Naive thymus-derived CD4-positive, alpha-beta T cell (primary cell): ENCODE measurements at regions of chr22 and their contacts with region 1.

Region 1: DNA sequence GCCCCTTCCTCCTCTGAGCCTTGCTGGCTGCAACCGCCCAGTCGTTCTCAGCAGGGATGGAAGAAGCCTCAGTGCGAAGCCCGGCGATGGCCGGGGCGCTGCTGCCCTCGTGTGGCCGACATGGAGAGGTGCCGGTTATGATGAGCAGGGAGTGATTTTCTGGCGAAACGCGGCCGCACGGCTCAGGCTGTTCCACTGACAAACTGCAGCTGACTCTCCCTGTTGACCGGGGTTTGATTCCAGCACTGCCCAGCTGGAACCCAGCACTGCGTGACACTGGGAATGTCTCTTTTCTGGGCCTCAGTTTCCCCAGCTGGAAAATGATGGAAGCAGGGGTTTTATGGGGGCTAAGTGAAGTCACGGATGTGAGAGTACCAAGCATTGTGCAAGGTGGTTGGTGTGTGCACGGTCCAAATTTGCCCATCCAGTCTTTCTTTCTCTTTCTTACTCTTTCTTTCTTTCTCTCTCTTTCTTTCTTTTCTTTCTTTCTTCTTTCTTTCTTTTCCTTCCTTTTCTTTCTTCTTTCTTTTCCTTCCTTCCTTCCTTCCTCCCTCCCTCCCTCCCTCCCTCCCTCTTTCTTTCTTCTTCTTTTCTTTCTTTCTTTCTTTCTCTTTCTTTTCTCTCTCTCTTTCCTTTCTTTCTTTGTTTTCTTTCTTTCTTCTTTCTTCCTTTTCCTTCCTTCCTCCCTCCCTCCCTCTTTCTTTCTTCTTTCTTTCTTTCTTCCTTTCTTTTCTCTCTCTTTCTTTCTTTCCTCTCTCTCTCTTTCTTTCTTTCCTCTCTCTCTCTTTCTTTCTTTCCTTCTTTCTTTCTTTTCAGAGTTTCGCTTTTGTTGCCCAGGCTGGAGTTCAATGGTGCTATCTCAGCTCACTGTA is 25.8 kb upstream of the MPPED1 start:
- DNase-seq: peak; percentile 34 to 74 (median 63)
- ATAC-seq: peak; percentile 92
- H3K4me3 ChIP-seq: no peak overlapping the region
- H3K4me3 Mint-ChIP-seq: peak overlapping the region in 4 of 10 donors; percentile 18 to 51 (median 32)
- H3K27ac ChIP-seq: no peak overlapping the region
- H3K27ac Mint-ChIP-seq: no peak overlapping the region
- H3K4me1 ChIP-seq: no peaks in the 10 kb centered on the region
- H3K4me1 Mint-ChIP-seq: peaks cover 0 to 8% (median 3%) of the 10 kb centered on the region in 7 donors
- H3K27me3 ChIP-seq: peaks cover 0 to 3% of the 10 kb centered on the region in 2 donors
- H3K27me3 Mint-ChIP-seq: peaks cover 8 to 47% (median 18%) of the 10 kb centered on the region in 5 donors

Region 2: DNA sequence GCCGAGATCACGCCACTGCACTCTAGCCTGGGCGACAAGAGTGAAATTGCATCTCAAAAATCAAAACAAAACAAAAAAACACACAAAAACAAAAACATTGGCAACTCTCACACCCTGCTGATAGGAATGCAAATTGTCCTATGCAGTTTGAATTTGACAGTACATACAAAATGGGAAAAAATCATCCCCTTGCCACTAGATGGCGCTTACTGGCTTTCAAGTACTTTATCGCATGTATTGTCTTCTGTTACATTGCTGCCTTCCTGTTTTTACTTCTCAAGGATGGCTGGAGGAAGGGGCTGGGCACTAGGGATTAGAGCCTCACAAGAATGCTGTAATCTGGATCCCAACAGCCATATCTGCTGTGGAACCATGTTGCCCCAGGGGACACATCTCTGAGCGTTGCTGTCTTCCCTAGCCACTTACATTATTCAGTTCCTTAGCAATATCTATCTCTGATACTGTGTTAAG is 605.9 kb before region 1 on chr22:
- CTCF ChIA-PET with region 1: no interaction called
- POLR2A ChIA-PET with region 1: no interaction called
- intact Hi-C with region 1: loop called in 1 of 2 experiments (anchors 5 kb)
- DNase-seq: peak in 7 of 9 donors; percentile 44 to 72 (median 62)
- ATAC-seq: peak; percentile 73
- H3K4me3 ChIP-seq: no peak overlapping the region
- H3K4me3 Mint-ChIP-seq: no peak overlapping the region
- H3K27ac ChIP-seq: no peak overlapping the region
- H3K27ac Mint-ChIP-seq: no peak overlapping the region
- H3K4me1 ChIP-seq: no peaks in the 10 kb centered on the region
- H3K4me1 Mint-ChIP-seq: peaks cover 0 to 2% (median 0%) of the 10 kb centered on the region in 7 donors
- H3K27me3 ChIP-seq: no peaks in the 10 kb centered on the region
- H3K27me3 Mint-ChIP-seq: no peaks in the 10 kb centered on the region

Region 3: GRCh38 chr22:43230971-43231723 is 154.9 kb before region 1 on chr22:
- CTCF ChIA-PET with region 1: interaction called, 6 read pairs
- POLR2A ChIA-PET with region 1: no interaction called
- intact Hi-C with region 1: loop called in 1 of 2 experiments (anchors 1 kb)
- DNase-seq: peak; percentile 14 to 70 (median 53)
- ATAC-seq: peak; percentile 76
- H3K4me3 ChIP-seq: no peak overlapping the region
- H3K4me3 Mint-ChIP-seq: no peak overlapping the region
- H3K27ac ChIP-seq: no peak overlapping the region
- H3K27ac Mint-ChIP-seq: no peak overlapping the region
- H3K4me1 ChIP-seq: peaks cover 0 to 6% of the 10 kb centered on the region in 2 donors
- H3K4me1 Mint-ChIP-seq: peaks cover 0 to 11% (median 5%) of the 10 kb centered on the region in 7 donors
- H3K27me3 ChIP-seq: no peaks in the 10 kb centered on the region
- H3K27me3 Mint-ChIP-seq: peaks cover 0 to 5% (median 0%) of the 10 kb centered on the region in 5 donors

Region 4: DNA sequence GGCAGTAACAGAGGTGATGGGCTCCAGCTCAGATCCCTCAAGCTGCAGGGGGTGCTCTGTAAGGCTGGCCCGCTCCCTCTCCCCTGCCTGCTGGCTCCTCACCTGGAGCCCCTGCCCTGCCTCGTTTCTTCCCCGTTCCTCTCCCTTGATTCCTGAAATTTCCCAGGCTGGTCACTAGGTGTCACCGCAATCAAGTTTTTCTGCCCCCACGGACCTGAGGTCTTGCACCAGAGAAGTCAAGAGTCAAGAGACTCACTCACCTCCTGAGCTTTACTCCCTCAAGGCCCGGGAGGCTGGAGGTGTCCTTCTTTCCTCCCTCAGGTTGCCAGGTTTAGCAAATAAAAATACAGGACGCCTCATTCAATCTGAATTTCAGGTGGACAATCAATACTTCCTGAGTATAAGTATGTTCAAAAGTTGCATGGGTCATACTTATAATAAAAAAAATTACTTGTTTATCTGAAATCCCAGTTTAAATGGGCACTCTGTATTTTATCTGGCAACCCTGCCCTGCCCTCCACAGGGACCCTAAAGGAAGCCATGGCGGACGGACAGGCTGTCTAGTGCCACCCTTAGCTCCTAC is 112.0 kb before region 1 on chr22:
- CTCF ChIA-PET with region 1: no interaction called
- POLR2A ChIA-PET with region 1: no interaction called
- intact Hi-C with region 1: loop called (anchors 1 kb)
- DNase-seq: peak in 7 of 9 donors; percentile 10 to 43 (median 21)
- ATAC-seq: peak; percentile 70
- H3K4me3 ChIP-seq: no peak overlapping the region
- H3K4me3 Mint-ChIP-seq: no peak overlapping the region
- H3K27ac ChIP-seq: no peak overlapping the region
- H3K27ac Mint-ChIP-seq: peak overlapping the region in 3 of 9 donors; percentile 14 to 76 (median 21)
- H3K4me1 ChIP-seq: no peaks in the 10 kb centered on the region
- H3K4me1 Mint-ChIP-seq: peaks cover 0 to 11% (median 0%) of the 10 kb centered on the region in 7 donors
- H3K27me3 ChIP-seq: no peaks in the 10 kb centered on the region
- H3K27me3 Mint-ChIP-seq: peaks cover 0 to 8% (median 0%) of the 10 kb centered on the region in 5 donors

Region 5: GRCh38 chr22:43346521-43346929 is 39.5 kb before region 1 on chr22:
- CTCF ChIA-PET with region 1: no interaction called
- POLR2A ChIA-PET with region 1: no interaction called
- intact Hi-C with region 1: loop called (anchors 1 to 2 kb)
- DNase-seq: peak; percentile 27 to 69 (median 45)
- ATAC-seq: peak; percentile 58
- H3K4me3 ChIP-seq: no peak overlapping the region
- H3K4me3 Mint-ChIP-seq: no peak overlapping the region
- H3K27ac ChIP-seq: no peak overlapping the region
- H3K27ac Mint-ChIP-seq: no peak overlapping the region
- H3K4me1 ChIP-seq: no peaks in the 10 kb centered on the region
- H3K4me1 Mint-ChIP-seq: peaks cover 4 to 24% (median 10%) of the 10 kb centered on the region in 7 donors
- H3K27me3 ChIP-seq: peaks cover 0 to 4% of the 10 kb centered on the region in 2 donors
- H3K27me3 Mint-ChIP-seq: peaks cover 33 to 61% (median 55%) of the 10 kb centered on the region in 5 donors

Region 6: DNA sequence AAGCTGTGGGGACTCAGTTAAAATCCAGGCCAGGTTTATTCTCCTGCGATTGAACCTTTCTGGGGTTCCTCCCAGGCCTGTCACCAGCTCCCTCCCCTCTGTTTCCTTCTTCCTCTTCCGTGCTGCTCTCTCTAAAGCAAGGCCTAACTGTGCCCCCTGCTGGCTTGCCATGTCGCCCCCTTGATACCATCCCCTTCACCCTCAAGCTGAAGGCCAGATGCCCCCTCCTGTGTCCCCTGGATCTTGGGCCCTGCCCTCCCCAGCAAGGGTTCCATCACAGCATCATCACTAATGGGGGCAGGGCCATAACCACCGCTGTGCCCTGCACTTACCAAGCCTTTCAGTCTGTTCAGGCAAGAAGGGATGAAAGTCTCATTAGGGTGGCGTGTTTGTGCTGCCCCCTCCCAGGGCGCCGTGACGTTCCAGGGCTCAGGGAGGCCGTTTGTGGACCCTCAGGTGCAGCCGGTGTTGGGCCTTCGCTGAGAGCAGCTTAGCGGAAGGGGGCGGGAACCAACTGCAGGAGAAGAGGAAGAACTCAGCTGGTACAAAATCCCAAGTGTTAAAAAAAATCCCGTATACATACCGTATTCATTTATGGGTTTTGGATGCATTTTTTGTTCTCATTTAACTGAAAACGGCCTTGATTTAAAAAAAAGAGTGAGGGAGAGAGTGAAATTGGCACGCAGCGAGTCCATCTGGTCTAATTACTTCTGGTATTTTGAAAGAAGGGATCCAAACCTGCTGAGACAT is 95.7 kb after region 1 on chr22:
- CTCF ChIA-PET with region 1: interaction called, 3 read pairs
- POLR2A ChIA-PET with region 1: no interaction called
- intact Hi-C with region 1: loop called in 1 of 2 experiments (anchors 5 kb)
- DNase-seq: peak in 6 of 9 donors; percentile 8 to 40 (median 30)
- ATAC-seq: peak; percentile 70
- H3K4me3 ChIP-seq: peak overlapping the region; percentile 34
- H3K4me3 Mint-ChIP-seq: peak overlapping the region; percentile 75 to 92 (median 86)
- H3K27ac ChIP-seq: peak overlapping the region; percentile 61
- H3K27ac Mint-ChIP-seq: peak overlapping the region; percentile 66 to 97 (median 88)
- H3K4me1 ChIP-seq: no peaks in the 10 kb centered on the region
- H3K4me1 Mint-ChIP-seq: peaks cover 3 to 23% (median 17%) of the 10 kb centered on the region in 7 donors
- H3K27me3 ChIP-seq: no peaks in the 10 kb centered on the region
- H3K27me3 Mint-ChIP-seq: peaks cover 0 to under 1% (median 0%) of the 10 kb centered on the region in 5 donors

Region 7: DNA sequence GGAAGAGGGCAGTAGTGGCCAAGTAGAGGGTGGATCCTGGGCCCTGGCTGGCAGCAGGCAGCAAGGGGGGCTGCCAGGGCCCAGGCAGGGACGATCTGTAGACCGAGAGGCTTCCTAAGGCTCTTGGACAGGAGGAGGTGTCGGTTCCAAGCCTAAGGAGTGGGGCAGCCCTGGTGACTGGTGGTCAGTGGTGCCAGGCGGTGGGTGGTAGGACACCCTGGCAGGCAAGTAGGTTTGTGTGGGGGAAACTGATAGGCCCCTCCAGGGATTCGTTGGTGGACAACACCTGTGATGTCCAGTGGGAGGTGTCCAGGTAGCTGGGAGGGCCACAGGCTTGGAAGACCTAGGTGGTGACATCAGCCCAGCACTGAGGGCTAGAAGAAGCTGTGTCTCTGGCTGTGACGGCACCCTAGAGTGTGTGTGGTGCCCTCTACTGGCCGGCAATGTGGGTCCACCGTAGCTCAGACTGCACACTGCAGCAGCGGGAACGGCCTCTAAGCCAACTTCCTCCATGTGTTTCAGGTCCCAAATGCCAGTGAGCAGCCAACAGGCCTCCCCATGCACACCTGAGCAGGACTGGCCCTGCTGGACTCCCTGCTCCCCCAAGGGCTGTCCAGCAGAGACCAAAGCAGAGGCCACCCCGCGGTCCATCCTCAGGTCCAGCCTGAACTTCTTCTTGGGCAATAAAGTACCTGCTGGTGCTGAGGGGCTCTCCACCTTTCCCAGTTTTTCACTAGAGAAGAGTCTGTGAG is 559.8 kb after region 1 on chr22:
- CTCF ChIA-PET with region 1: no interaction called
- POLR2A ChIA-PET with region 1: no interaction called
- intact Hi-C with region 1: loop called in 1 of 2 experiments (anchors 2 kb)
- DNase-seq: peak; percentile 18 to 71 (median 48)
- ATAC-seq: peak; percentile 97
- H3K4me3 ChIP-seq: no peak overlapping the region
- H3K4me3 Mint-ChIP-seq: no peak overlapping the region
- H3K27ac ChIP-seq: no peak overlapping the region
- H3K27ac Mint-ChIP-seq: no peak overlapping the region
- H3K4me1 ChIP-seq: no peaks in the 10 kb centered on the region
- H3K4me1 Mint-ChIP-seq: peaks cover 0 to 5% (median 0%) of the 10 kb centered on the region in 7 donors
- H3K27me3 ChIP-seq: no peaks in the 10 kb centered on the region
- H3K27me3 Mint-ChIP-seq: peaks cover 2 to 12% (median 9%) of the 10 kb centered on the region in 5 donors